BJ (cell line): ENCODE measurements at regions of chr5 and their contacts with region 1.

Region 1: GRCh38 chr5:139517683-139518564 is 35.4 kb upstream of the STING1 start:
- DNase-seq: peak; percentile 33
- H3K4me3 ChIP-seq: peak overlapping the region; percentile 59
- H3K27me3 ChIP-seq: no peaks in the 10 kb centered on the region
- CTCF ChIP-seq: peak; percentile 93

Region 2: DNA sequence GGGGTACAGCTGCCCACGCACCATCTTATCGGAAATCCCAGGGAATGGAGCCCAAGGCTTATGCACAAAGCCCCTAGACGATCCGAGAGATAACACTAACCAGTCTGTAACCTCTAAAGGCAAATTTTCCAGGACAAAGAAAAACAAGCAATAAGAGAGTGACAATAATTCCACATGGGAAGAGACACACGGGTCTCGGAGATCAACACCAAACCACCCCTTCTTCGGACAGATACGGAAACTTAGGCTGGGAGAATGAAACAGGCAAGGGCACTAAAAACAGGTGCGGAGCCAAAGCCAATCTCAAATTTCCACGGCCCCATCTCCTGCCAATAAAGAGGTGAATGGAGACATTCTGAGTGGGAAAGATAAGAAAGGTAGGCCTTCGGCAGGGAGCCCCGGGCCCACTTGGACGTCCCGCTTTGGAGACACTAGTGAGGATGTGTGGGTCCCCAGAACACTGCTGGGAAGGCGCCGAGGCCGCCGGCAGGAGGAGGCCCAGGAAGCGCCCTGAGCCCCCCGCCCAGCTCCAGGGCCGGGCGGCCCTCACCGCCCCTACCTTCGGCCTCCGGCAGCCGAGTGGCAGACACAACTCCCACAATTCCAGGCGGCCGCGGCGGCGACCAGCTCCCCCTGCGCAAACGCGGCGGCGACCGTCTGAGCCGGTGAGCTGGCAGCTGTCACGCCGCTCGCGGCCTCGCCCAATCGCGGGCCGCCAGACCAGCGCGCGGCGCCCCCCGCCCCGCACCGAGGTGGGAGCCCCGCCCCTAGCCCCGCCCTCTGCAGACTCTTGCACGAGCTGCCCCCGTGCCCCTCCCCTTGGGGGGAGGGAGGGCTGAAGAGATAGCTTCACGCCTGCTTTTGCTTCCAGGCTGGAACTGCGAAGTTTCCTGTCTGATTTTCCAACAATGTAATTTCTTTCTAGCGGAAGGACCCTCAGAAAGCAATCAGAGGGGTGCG is 319.9 kb before region 1 on chr5 and contains the start of gene SIL1:
- CTCF ChIA-PET with region 1: no interaction called
- POLR2A ChIA-PET with region 1: no interaction called
- DNase-seq: peak; percentile 79
- H3K4me3 ChIP-seq: peak within 1 kb of the TSS; percentile 74
- H3K27me3 ChIP-seq: no peaks in the 10 kb centered on the region
- CTCF ChIP-seq: no peak
- polyA plus RNA-seq, gene SIL1: 73.5 and 90.5 TPM in 2 replicates

Region 3: GRCh38 chr5:139415221-139415861 is 102.6 kb before region 1 on chr5:
- CTCF ChIA-PET with region 1: interaction called, 232 read pairs
- POLR2A ChIA-PET with region 1: no interaction called
- DNase-seq: no peak
- H3K4me3 ChIP-seq: no peak overlapping the region
- H3K27me3 ChIP-seq: no peaks in the 10 kb centered on the region
- CTCF ChIP-seq: no peak

Region 4: GRCh38 chr5:139422307-139422893 is 95.5 kb before region 1 on chr5:
- CTCF ChIA-PET with region 1: interaction called, 232 read pairs
- POLR2A ChIA-PET with region 1: no interaction called
- DNase-seq: no peak
- H3K4me3 ChIP-seq: no peak overlapping the region
- H3K27me3 ChIP-seq: no peaks in the 10 kb centered on the region
- CTCF ChIP-seq: peak; percentile 84

Region 5: DNA sequence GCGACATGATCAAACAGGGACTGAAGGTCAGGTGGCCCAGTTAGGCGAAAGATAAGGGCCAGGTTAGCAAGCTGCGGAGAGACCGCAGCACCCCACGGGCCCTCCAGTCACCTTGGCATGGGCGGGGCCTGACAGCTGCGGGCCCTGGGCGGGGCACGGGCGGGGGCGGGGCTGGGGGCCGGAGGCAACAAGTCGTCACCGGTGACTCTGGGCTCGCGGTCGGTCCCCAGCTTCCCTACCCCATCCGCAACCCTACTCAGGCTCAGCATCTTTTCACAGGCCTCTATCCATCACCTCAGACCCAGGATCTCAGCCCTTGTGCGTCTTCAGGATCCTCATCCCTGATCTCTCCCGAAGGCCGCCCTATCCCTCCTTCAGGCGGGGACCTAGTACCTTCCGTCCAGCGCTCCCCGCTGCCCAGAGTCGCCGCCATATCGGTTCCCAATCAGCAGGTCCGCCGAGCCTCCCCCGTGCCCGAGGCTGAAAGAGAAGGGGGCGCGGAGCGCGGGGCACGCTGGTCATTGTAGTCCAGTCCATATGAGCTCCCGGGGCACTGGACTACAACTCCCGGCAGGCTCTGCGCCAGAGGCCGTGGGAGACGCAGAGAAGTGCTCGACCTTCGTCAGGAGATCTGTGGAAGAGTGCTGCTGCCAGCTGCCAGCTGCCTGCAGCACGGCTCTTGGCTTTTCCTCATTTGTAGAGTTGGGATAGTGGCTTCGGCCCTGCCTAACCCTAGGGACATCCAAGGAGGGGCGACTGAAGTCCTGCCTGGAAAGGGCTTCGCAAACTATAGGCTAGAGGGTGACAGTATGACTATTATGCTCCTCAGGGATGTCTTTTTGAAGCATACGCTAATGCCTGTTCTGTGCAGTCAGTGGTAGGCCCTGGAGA is 78.7 kb before region 1 on chr5 and contains the start of gene DNAJC18:
- CTCF ChIA-PET with region 1: interaction called, 10 read pairs
- POLR2A ChIA-PET with region 1: no interaction called
- DNase-seq: no peak
- H3K4me3 ChIP-seq: peak within 1 kb of the TSS; percentile 69
- H3K27me3 ChIP-seq: no peaks in the 10 kb centered on the region
- CTCF ChIP-seq: no peak
- polyA plus RNA-seq, gene DNAJC18: 5.2 and 9.3 TPM in 2 replicates

Region 6: DNA sequence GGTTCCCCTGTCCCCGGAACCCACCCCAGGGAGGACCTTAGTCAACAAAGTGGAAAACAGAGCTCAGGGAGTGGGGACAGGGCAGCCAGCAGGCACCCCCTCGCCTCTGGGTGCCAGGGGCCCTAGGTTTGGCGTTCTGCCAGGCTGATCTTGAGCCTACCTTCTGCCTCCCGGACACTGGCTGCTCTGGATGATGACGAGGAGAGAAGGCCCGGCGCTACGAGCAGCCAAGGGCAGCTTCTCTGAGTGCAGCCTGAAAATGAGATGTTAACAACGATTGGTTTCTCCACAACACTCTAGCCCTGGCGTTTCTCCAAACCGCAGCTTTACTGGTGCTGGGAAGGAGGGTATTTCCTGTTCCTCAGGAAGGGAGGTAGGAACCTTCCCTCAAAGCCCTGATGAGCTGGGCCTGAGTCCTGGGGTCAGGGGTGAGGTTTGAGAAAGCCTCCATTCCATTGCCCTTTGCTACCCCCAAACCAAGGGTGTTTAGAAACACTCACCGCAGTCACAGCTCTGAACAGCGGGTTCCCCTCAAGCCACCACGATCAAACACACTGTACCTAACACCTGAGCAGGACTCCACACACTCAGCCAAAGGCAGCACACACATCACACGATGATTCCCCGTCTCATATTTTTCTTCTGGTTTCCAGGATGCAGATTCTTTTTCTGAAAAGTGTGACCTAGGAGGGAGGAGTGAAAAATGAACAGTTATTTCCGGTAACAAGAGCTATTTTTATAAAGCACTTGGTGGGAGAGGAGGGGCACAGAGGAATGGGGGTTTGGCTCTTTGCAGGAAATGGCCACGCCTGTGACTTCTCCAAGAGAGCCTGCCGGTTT is 35.7 kb before region 1 on chr5 and contains the start of gene STING1:
- CTCF ChIA-PET with region 1: interaction called, 13 read pairs
- POLR2A ChIA-PET with region 1: no interaction called
- DNase-seq: peak; percentile 84
- H3K4me3 ChIP-seq: peak within 1 kb of the TSS; percentile 57
- H3K27me3 ChIP-seq: no peaks in the 10 kb centered on the region
- CTCF ChIP-seq: no peak
- polyA plus RNA-seq, gene STING1: 110 and 194 TPM in 2 replicates

Region 7: GRCh38 chr5:139495638-139496435 is 22.1 kb before region 1 on chr5:
- CTCF ChIA-PET with region 1: interaction called, 30 read pairs
- POLR2A ChIA-PET with region 1: no interaction called
- DNase-seq: no peak
- H3K4me3 ChIP-seq: no peak overlapping the region
- H3K27me3 ChIP-seq: no peaks in the 10 kb centered on the region
- CTCF ChIP-seq: no peak

Region 8: DNA sequence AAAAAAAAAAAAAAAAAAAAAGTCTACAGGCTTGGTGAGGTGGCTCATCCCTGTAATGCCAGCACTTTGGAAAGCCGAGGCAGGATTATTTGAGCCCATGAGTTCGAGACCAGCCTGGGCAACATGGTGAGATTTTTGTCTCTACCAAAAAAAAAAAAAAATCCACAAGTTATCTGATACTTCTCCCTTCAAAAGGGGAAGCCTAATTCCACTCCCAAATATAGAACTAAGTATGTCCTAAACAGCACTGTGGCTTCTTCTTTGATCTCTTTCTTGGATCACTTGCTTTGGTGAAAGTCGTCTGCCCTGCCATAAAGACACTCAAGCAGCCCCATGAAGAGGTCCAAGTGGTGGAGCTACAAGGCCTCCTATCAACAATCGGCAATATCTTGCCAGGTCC is 16.5 kb before region 1 on chr5:
- CTCF ChIA-PET with region 1: interaction called, 30 read pairs
- POLR2A ChIA-PET with region 1: no interaction called
- DNase-seq: no peak
- H3K4me3 ChIP-seq: no peak overlapping the region
- H3K27me3 ChIP-seq: no peaks in the 10 kb centered on the region
- CTCF ChIP-seq: no peak